Sciatic nerve (tissue), 2 donors: ENCODE measurements at regions of chr2 and their contacts with region 1.

Region 1: DNA sequence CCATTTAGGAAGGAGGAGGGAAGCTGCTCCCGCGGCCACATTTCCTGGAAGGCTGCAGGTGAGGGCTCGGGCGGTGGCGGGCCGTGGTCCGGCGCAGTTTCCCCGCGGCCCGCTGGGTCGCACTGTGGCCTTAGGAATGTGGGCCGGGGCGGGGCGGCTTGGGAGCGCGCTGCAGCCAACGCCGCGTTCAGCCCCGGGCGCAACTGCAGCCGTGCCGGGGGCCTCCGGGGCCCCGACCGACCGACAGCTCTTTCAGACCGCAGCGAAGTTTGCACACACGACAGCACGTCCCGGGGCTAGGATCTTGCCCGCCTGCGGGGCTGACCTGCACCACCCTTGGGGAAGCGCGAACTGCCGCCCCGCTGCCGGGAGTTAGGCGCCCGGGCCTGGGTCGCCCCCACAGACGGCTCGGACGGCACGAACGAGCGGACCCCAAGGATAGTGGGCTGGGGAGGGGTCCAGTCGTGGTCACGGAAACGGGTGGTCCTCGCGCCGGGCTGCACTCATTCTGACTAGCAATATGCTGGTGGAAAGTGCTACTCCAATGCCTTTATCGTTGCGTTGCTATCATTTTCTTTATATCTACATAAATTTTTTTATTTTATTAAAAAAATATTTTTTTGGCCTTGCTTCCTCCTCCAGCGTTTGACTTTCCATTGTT is 69.9 kb upstream of the DLX2 start:
- DNase-seq: peak; percentile 82
- ATAC-seq: peak; percentile 97

Region 2: GRCh38 chr2:172465417-172466334 is 293.0 kb after region 1 on chr2:
- intact Hi-C with region 1: loop called (anchors 5 kb)
- DNase-seq: peak; percentile 82
- ATAC-seq: peak; percentile 81